Common myeloid progenitor, CD34-positive (primary cell): ENCODE measurements at regions of chr5 and their contacts with region 1.

Region 1: GRCh38 chr5:11700391-11700790 is 203.9 kb downstream of the CTNND2 start:
- DNase-seq: no peak
- H3K4me3 ChIP-seq: no peak overlapping the region
- H3K27ac ChIP-seq: no peak overlapping the region
- H3K4me1 ChIP-seq: no peaks in the 10 kb centered on the region
- H3K27me3 ChIP-seq: no peaks in the 10 kb centered on the region

Region 2: DNA sequence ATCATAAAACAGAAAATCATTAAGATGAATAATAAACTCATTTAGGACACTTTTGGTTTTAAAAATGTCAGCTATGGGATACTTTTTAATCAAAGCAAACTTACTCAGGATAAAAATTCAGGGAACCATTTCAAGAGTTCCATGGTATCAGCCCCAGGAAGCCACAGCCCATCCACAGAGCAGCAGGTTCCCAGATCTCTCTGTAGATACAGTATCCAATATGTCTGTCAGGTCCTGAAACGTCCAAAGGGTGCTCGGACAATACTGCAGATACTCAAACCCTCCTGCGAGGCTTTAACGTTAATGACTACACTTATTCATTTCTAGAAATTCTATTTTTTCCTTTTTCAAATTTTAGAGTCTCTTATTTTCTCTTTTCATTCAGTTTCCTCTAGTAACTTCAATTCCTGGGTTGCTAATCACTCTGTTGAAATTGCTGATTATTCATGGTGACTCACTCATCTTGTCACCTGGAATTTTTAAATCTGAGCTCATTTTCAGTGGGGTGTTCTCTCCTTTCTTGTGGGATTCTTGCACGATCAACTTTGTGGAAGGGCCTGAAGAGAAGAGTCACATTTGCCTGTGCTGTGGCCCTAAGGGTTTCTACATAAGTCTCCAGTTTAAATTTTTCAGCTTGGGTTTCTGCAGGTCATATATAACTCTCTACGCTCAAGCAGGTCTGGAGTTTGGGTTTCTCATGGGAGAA is 231.9 kb before region 1 on chr5:
- CTCF ChIA-PET with region 1: no interaction called
- POLR2A ChIA-PET with region 1: no interaction called
- DNase-seq: no peak
- H3K4me3 ChIP-seq: no peak overlapping the region
- H3K27ac ChIP-seq: no peak overlapping the region
- H3K4me1 ChIP-seq: no peaks in the 10 kb centered on the region
- H3K27me3 ChIP-seq: no peaks in the 10 kb centered on the region

Region 3: GRCh38 chr5:11504892-11505545 is 195.4 kb before region 1 on chr5:
- CTCF ChIA-PET with region 1: no interaction called
- POLR2A ChIA-PET with region 1: no interaction called
- DNase-seq: no peak
- H3K4me3 ChIP-seq: no peak overlapping the region
- H3K27ac ChIP-seq: no peak overlapping the region
- H3K4me1 ChIP-seq: peaks cover 0 to 7% (median 0%) of the 10 kb centered on the region in 4 experiments
- H3K27me3 ChIP-seq: no peaks in the 10 kb centered on the region

Region 4: DNA sequence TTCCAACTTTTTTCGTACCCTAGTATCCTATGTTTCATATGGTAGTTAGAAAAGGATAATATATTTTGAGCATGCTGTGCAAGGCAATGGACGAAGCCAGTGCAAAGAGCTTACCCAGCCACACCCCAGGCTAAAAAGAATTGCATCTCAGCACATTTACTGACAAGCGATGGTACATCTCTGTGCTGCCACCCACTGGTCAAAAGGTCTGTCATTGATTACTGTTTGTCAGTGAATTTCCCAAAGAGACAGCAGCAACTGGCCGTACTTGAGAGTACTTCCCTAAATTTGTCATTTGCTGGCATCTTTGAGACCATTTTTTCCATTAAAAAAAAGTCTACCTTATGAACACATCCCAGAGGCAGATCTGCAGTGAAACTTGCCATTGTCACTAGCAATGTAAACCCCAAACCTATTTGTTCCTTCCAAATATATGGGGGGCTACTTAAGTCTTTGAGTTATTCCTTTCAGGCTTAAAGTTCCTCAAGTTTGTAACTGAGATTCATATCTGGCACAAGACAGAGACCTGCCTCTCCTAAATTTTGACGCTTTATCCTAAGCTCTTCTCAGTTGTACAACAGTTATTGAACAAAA is 19.6 kb after region 1 on chr5:
- CTCF ChIA-PET with region 1: interaction called, 3 read pairs
- POLR2A ChIA-PET with region 1: interaction called, 10 read pairs
- DNase-seq: peak; percentile 77 to 86 (median 83)
- H3K4me3 ChIP-seq: no peak overlapping the region
- H3K27ac ChIP-seq: no peak overlapping the region
- H3K4me1 ChIP-seq: no peaks in the 10 kb centered on the region
- H3K27me3 ChIP-seq: no peaks in the 10 kb centered on the region